ENCODE measurements at regions of chr5 and their contacts with region 1.

Region 1: DNA sequence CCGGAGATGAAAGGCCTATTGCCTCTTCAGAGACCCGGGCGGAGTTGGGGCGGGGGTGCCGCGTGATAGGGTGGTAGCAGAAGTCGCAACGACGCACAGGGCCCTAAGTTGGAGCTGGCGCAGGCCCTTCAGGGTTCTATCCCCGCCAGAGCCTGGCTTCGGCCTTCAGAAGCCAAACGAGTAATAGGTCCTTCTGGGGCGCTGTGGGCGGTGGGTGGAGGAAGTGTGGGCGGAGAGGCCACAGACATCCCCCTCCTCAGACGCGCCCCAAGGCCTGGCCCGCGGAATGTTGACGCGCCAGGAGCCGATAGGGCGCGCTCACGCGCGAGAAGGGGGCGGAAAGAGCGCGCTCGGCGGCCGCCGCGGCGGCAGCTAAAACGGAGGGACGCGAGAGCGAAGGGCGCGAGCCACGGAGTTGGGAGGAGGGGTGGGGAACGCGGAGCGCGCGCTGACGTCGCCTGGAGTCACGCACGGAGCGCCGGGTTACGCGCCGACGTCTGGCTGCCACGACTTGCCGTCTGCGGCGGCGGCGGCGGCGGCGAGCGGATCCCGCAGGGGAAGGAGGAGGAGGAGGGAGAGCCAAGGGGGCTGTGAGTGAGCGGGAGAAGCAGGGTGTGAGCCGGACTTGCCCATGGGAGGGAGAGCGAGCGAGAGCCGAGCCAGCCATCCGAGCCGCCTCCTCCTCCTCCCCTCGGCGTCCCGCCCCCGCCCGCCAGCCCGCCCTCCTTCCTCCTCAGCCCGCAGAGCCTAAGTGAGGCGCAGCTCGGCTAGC is 6.4 kb upstream of the PURA start:
- DNase-seq: peak; percentile 87 to 96 (median 94)
- ATAC-seq: peak; percentile 92
- H3K4me3 ChIP-seq: peak overlapping the region; percentile 80
- H3K4me3 Mint-ChIP-seq: peak overlapping the region; percentile 93 to 99 (median 97)
- H3K27ac ChIP-seq: peak overlapping the region; percentile 91
- H3K27ac Mint-ChIP-seq: peak overlapping the region; percentile 96 to 99 (median 99)
- H3K4me1 ChIP-seq: peaks cover 19 to 35% of the 10 kb centered on the region in 2 donors
- H3K4me1 Mint-ChIP-seq: peaks cover 30 to 59% (median 47%) of the 10 kb centered on the region in 7 donors
- H3K27me3 ChIP-seq: peaks cover 0 to 7% of the 10 kb centered on the region in 2 donors
- H3K27me3 Mint-ChIP-seq: peaks cover 0 to 77% (median 4%) of the 10 kb centered on the region in 5 donors

Region 2: GRCh38 chr5:138331449-138332368 is 1775.8 kb before region 1 on chr5 and contains the start of gene CDC25C:
- CTCF ChIA-PET with region 1: no interaction called
- POLR2A ChIA-PET with region 1: no interaction called
- intact Hi-C with region 1: loop called in 1 of 2 experiments (anchors 10 kb)
- DNase-seq: peak; percentile 87 to 98 (median 96)
- ATAC-seq: peak; percentile 100
- H3K4me3 ChIP-seq: peak within 1 kb of the TSS; percentile 85
- H3K4me3 Mint-ChIP-seq: peak within 1 kb of the TSS; percentile 83 to 95 (median 86)
- H3K27ac ChIP-seq: peak within 1 kb of the TSS; percentile 49
- H3K27ac Mint-ChIP-seq: peak within 1 kb of the TSS; percentile 48 to 92 (median 68)
- H3K4me1 ChIP-seq: peaks cover 1 to 7% of the 10 kb centered on the region in 2 donors
- H3K4me1 Mint-ChIP-seq: peaks cover 7 to 35% (median 14%) of the 10 kb centered on the region in 7 donors
- H3K27me3 ChIP-seq: no peaks in the 10 kb centered on the region
- H3K27me3 Mint-ChIP-seq: no peaks in the 10 kb centered on the region
- total RNA-seq, gene CDC25C: 9.8 TPM in 1 of 5 experiments, not detected in the others

Region 3: GRCh38 chr5:138528208-138528607 is 1579.3 kb before region 1 on chr5:
- CTCF ChIA-PET with region 1: no interaction called
- POLR2A ChIA-PET with region 1: no interaction called
- intact Hi-C with region 1: no loop called
- DNase-seq: no peak
- ATAC-seq: no peak
- H3K4me3 ChIP-seq: no peak overlapping the region
- H3K4me3 Mint-ChIP-seq: no peak overlapping the region
- H3K27ac ChIP-seq: no peak overlapping the region
- H3K27ac Mint-ChIP-seq: no peak overlapping the region
- H3K4me1 ChIP-seq: no peaks in the 10 kb centered on the region
- H3K4me1 Mint-ChIP-seq: peaks cover 24 to 55% (median 46%) of the 10 kb centered on the region in 7 donors
- H3K27me3 ChIP-seq: no peaks in the 10 kb centered on the region
- H3K27me3 Mint-ChIP-seq: no peaks in the 10 kb centered on the region

Region 4: GRCh38 chr5:139293504-139294373 is 813.8 kb before region 1 on chr5 and contains the start of gene MATR3:
- CTCF ChIA-PET with region 1: no interaction called
- POLR2A ChIA-PET with region 1: interaction called, 7 read pairs
- intact Hi-C with region 1: loop called (anchors 5 kb)
- DNase-seq: peak; percentile 83 to 94 (median 91)
- ATAC-seq: peak; percentile 95
- H3K4me3 ChIP-seq: peak within 1 kb of the TSS; percentile 87
- H3K4me3 Mint-ChIP-seq: peak within 1 kb of the TSS; percentile 91 to 99 (median 98)
- H3K27ac ChIP-seq: peak within 1 kb of the TSS; percentile 98
- H3K27ac Mint-ChIP-seq: peak within 1 kb of the TSS; percentile 96 to 100 (median 99)
- H3K4me1 ChIP-seq: peaks cover 29 to 37% of the 10 kb centered on the region in 2 donors
- H3K4me1 Mint-ChIP-seq: peaks cover 33 to 51% (median 42%) of the 10 kb centered on the region in 7 donors
- H3K27me3 ChIP-seq: no peaks in the 10 kb centered on the region
- H3K27me3 Mint-ChIP-seq: no peaks in the 10 kb centered on the region
- total RNA-seq, gene MATR3: 219 to 333 (median 274) TPM

Region 5: DNA sequence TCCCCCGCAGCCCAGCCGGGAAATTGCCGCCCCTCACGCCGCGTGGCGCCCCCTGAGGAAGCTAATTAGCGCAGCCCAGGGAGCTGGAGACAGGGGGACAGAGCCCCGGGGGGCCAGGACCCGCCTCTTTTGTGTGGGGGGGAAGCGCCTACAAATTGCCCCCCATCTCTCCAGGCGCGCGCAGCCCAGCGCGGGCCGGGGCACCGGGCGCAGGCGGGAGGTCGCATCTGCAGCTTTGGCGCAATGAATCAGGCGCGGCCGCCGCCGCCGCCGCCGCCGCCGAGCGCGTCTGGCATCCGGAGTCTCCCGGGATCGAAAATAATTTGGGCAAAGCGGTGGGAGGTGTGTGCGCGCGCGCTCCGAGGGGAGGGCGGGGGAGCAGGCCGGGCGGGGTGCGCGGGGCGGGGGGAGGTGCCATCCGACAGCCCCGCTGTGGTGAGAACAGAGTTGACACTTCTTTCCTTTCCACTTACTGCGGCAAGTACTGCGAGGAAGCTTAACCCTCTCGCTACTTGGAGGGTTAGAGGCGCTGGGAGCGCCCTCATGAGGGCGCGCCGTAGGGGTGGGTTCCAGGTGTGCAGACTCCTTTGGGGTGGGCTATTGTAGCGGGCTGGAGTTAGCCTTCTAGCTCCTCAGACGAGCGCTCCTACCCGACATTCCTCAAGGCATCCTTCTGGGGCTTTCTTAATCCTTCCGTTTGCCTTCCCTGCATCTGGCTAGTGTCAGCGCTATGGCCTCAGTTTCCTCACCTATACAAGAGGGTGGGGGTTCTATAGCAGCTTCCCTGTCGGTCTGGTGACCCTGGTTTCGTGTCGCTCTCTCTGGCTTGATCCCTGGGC is 396.2 kb before region 1 on chr5:
- CTCF ChIA-PET with region 1: no interaction called
- POLR2A ChIA-PET with region 1: no interaction called
- intact Hi-C with region 1: loop called in 1 of 2 experiments (anchors 2 kb)
- DNase-seq: peak; percentile 37 to 74 (median 53)
- ATAC-seq: peak; percentile 75
- H3K4me3 ChIP-seq: peak overlapping the region; percentile 58
- H3K4me3 Mint-ChIP-seq: peak overlapping the region; percentile 74 to 85 (median 80)
- H3K27ac ChIP-seq: peak overlapping the region; percentile 63
- H3K27ac Mint-ChIP-seq: peak overlapping the region in 6 of 9 donors; percentile 25 to 87 (median 64)
- H3K4me1 ChIP-seq: peaks cover 14 to 19% of the 10 kb centered on the region in 2 donors
- H3K4me1 Mint-ChIP-seq: peaks cover 10 to 31% (median 23%) of the 10 kb centered on the region in 7 donors
- H3K27me3 ChIP-seq: no peaks in the 10 kb centered on the region
- H3K27me3 Mint-ChIP-seq: peaks cover 0 to 51% (median 0%) of the 10 kb centered on the region in 5 donors

Region 6: GRCh38 chr5:140038373-140038957 is 69.0 kb before region 1 on chr5:
- CTCF ChIA-PET with region 1: no interaction called
- POLR2A ChIA-PET with region 1: no interaction called
- intact Hi-C with region 1: no loop called
- DNase-seq: no peak
- ATAC-seq: no peak
- H3K4me3 ChIP-seq: no peak overlapping the region
- H3K4me3 Mint-ChIP-seq: peak overlapping the region in 5 of 10 donors; percentile 6 to 29 (median 24)
- H3K27ac ChIP-seq: no peak overlapping the region
- H3K27ac Mint-ChIP-seq: no peak overlapping the region
- H3K4me1 ChIP-seq: peaks cover 3 to 4% of the 10 kb centered on the region in 2 donors
- H3K4me1 Mint-ChIP-seq: peaks cover 11 to 19% (median 13%) of the 10 kb centered on the region in 7 donors
- H3K27me3 ChIP-seq: peaks cover 0 to 3% of the 10 kb centered on the region in 2 donors
- H3K27me3 Mint-ChIP-seq: peaks cover 62 to 81% (median 74%) of the 10 kb centered on the region in 5 donors

Region 7: DNA sequence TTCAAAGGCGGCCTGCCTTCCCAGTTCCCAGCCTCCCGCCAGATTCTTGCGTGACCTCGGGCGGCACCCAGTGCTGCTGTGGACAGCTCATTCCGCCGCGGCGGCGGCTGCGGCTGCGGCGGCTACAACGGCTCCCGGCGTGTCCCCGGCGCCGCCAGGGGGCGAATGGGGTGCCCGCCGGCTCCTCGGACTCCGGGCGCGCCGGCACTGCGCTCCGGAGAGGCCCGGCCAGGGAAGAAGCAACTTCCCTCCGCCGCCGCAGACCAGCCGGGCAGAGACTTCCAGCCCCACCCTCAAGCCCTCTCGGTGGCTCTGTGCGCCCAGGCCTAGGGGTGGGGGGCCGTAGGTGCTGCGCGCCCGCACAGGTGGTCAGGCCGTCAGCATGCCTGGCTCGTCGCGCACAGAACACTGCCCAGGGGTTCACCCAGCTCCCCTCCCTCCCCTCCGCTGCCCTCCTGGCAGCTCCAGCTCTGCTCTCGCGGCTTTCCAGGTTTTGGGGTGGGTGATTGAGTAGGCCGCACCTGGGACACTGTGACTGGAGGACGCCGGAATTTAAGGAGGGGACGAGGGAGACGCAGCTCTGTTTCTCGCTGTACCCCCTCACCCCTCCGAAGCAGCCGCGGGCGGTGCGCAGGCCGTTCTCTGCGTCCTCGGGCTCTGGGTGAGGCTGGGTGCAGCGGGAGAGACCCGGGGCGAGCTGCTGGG is 38.5 kb after region 1 on chr5:
- CTCF ChIA-PET with region 1: interaction called, 30 read pairs
- POLR2A ChIA-PET with region 1: interaction called, 7 read pairs
- intact Hi-C with region 1: loop called (anchors 1 kb)
- DNase-seq: peak in 8 of 9 donors; percentile 25 to 69 (median 42)
- ATAC-seq: peak; percentile 86
- H3K4me3 ChIP-seq: peak overlapping the region; percentile 27
- H3K4me3 Mint-ChIP-seq: peak overlapping the region in 9 of 10 donors; percentile 16 to 81 (median 72)
- H3K27ac ChIP-seq: no peak overlapping the region
- H3K27ac Mint-ChIP-seq: no peak overlapping the region
- H3K4me1 ChIP-seq: peaks cover 6 to 9% of the 10 kb centered on the region in 2 donors
- H3K4me1 Mint-ChIP-seq: peaks cover 14 to 29% (median 25%) of the 10 kb centered on the region in 7 donors
- H3K27me3 ChIP-seq: peaks cover 0 to 6% of the 10 kb centered on the region in 2 donors
- H3K27me3 Mint-ChIP-seq: peaks cover 9 to 48% (median 21%) of the 10 kb centered on the region in 5 donors

Region 8: GRCh38 chr5:140564196-140565023 is 456.9 kb after region 1 on chr5 and contains the starts of genes APBB3 and SLC35A4:
- CTCF ChIA-PET with region 1: no interaction called
- POLR2A ChIA-PET with region 1: no interaction called
- intact Hi-C with region 1: loop called (anchors 5 kb)
- DNase-seq: peak; percentile 89 to 99 (median 98)
- ATAC-seq: peak; percentile 92
- H3K4me3 ChIP-seq: peak within 1 kb of the TSS; percentile 91
- H3K4me3 Mint-ChIP-seq: peak within 1 kb of the TSS; percentile 91 to 96 (median 94)
- H3K27ac ChIP-seq: peak within 1 kb of the TSS; percentile 94
- H3K27ac Mint-ChIP-seq: peak within 1 kb of the TSS; percentile 92 to 99 (median 96)
- H3K4me1 ChIP-seq: peaks cover 21 to 25% of the 10 kb centered on the region in 2 donors
- H3K4me1 Mint-ChIP-seq: peaks cover 27 to 75% (median 62%) of the 10 kb centered on the region in 7 donors
- H3K27me3 ChIP-seq: no peaks in the 10 kb centered on the region
- H3K27me3 Mint-ChIP-seq: no peaks in the 10 kb centered on the region
- total RNA-seq, gene APBB3: 37.9 to 77.8 (median 72.4) TPM
- total RNA-seq, gene SLC35A4: 40.4 to 90.1 (median 52.4) TPM

Region 9: GRCh38 chr5:141320225-141321169 is 1213.0 kb after region 1 on chr5 and contains the start of gene TAF7:
- CTCF ChIA-PET with region 1: no interaction called
- POLR2A ChIA-PET with region 1: no interaction called
- intact Hi-C with region 1: loop called in 1 of 2 experiments (anchors 10 kb)
- DNase-seq: peak; percentile 88 to 94 (median 94)
- ATAC-seq: peak; percentile 94
- H3K4me3 ChIP-seq: peak within 1 kb of the TSS; percentile 95
- H3K4me3 Mint-ChIP-seq: peak within 1 kb of the TSS; percentile 90 to 100 (median 98)
- H3K27ac ChIP-seq: peak within 1 kb of the TSS; percentile 88
- H3K27ac Mint-ChIP-seq: peak within 1 kb of the TSS; percentile 97 to 100 (median 99)
- H3K4me1 ChIP-seq: peaks cover 7% of the 10 kb centered on the region in 2 donors
- H3K4me1 Mint-ChIP-seq: peaks cover 18 to 40% (median 27%) of the 10 kb centered on the region in 7 donors
- H3K27me3 ChIP-seq: no peaks in the 10 kb centered on the region
- H3K27me3 Mint-ChIP-seq: peaks cover 0 to 3% (median 0%) of the 10 kb centered on the region in 5 donors
- total RNA-seq, gene TAF7: 64.5 to 115 (median 84.9) TPM

Measured in naive thymus-derived CD4-positive, alpha-beta T cell (primary cell).